Sigmoid colon (tissue), 7 donors: ENCODE measurements at regions of chr12 and their contacts with region 1.

Region 1: GRCh38 chr12:14769969-14770495 is 33.2 kb downstream of the WBP11 start:
- DNase-seq: peak; percentile 91
- H3K4me3 ChIP-seq: peak overlapping the region; percentile 63 to 85 (median 68)
- H3K27ac ChIP-seq: peak overlapping the region; percentile 88 to 96 (median 92)
- H3K4me1 ChIP-seq: peaks cover 0 to 34% (median 20%) of the 10 kb centered on the region in 4 donors
- H3K27me3 ChIP-seq: no peaks in the 10 kb centered on the region
- CTCF ChIP-seq: peak; percentile 92 to 97 (median 94)
- EP300 ChIP-seq: no peak
- POLR2A ChIP-seq: peak; percentile 34 to 39

Region 2: GRCh38 chr12:14257734-14258574 is 512.1 kb before region 1 on chr12:
- intact Hi-C with region 1: loop called (anchors 10 kb)
- DNase-seq: peak; percentile 95
- H3K4me3 ChIP-seq: peak overlapping the region in 1 of 4 donors; percentile 20
- H3K27ac ChIP-seq: peak overlapping the region; percentile 79 to 91 (median 83)
- H3K4me1 ChIP-seq: peaks cover 5 to 56% (median 48%) of the 10 kb centered on the region in 4 donors
- H3K27me3 ChIP-seq: no peaks in the 10 kb centered on the region
- CTCF ChIP-seq: no peak
- EP300 ChIP-seq: peak in 3 of 4 donors; percentile 30 to 63 (median 54)
- POLR2A ChIP-seq: no peak

Region 3: DNA sequence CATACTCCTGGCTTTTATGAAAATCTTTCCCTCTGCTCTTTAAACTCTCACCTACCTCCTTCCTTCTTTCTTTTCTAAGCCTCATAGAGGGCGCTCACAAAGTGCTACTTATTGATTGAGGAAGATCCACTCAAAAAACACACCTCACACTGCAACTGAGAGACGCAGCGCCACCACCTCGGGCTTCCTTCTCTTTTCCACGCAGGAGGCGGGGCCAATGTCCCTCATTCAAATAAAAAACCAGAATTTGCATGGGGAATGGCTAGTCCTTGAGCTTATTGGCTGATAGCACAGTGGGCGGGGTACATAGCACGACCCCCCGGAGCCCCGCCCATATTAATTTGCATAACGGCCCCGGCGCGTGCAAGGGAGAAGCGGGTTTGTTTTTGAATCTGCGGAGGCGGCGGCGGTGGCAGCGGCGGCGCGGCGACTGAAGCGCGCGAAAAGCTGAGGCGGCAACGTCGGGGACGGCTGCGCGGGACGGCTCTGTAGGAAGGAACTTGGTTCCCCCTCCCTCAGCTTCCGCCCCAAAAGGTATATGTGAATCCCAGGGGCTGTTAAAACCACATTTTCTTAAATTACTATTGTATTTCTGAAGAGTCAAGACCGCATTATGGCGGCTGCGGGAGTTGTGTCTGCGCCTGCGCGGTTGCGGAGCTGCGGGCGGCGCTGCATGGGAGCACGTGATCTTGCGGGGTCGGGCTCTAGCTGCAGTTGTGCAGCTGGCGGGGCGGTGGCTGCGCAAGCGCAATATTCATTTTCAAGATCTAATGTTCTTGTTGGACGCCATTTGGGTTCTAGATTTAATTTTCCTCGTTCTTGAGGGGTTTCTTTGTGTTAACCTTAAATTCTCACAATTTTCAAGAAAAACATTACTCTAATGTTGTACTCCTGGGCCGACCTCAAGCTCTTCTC is 404.5 kb before region 1 on chr12 and contains the start of gene ATF7IP:
- intact Hi-C with region 1: loop called (anchors 5 kb)
- DNase-seq: peak; percentile 98
- H3K4me3 ChIP-seq: peak within 1 kb of the TSS; percentile 61 to 69 (median 64)
- H3K27ac ChIP-seq: peak within 1 kb of the TSS; percentile 90 to 98 (median 93)
- H3K4me1 ChIP-seq: peaks cover 0 to 23% (median 8%) of the 10 kb centered on the region in 4 donors
- H3K27me3 ChIP-seq: no peaks in the 10 kb centered on the region
- CTCF ChIP-seq: peak in 2 of 4 experiments; percentile 6 to 16
- EP300 ChIP-seq: peak in 1 of 4 donors; percentile 7
- POLR2A ChIP-seq: peak; percentile 33 to 66
- total RNA-seq, gene ATF7IP: 27.7 to 58.4 (median 44.6) TPM

Region 4: GRCh38 chr12:14710632-14711320 is 59.3 kb before region 1 on chr12:
- intact Hi-C with region 1: no loop called
- DNase-seq: no peak
- H3K4me3 ChIP-seq: no peak overlapping the region
- H3K27ac ChIP-seq: peak overlapping the region in 3 of 4 donors; percentile 48 to 51 (median 48)
- H3K4me1 ChIP-seq: peaks cover 0 to 28% (median 16%) of the 10 kb centered on the region in 4 donors
- H3K27me3 ChIP-seq: no peaks in the 10 kb centered on the region
- CTCF ChIP-seq: no peak
- EP300 ChIP-seq: no peak
- POLR2A ChIP-seq: no peak

Region 5: GRCh38 chr12:14803011-14803829 is 33.2 kb after region 1 on chr12 and contains the starts of genes C12orf60 and WBP11:
- intact Hi-C with region 1: loop called (anchors 2 kb)
- DNase-seq: peak; percentile 99
- H3K4me3 ChIP-seq: peak within 1 kb of the TSS; percentile 63 to 84 (median 77)
- H3K27ac ChIP-seq: peak within 1 kb of the TSS; percentile 81 to 97 (median 92)
- H3K4me1 ChIP-seq: peaks cover 0 to 19% (median 16%) of the 10 kb centered on the region in 4 donors
- H3K27me3 ChIP-seq: no peaks in the 10 kb centered on the region
- CTCF ChIP-seq: no peak
- EP300 ChIP-seq: peak in 2 of 4 donors; percentile 15 to 46
- POLR2A ChIP-seq: peak; percentile 69 to 70
- total RNA-seq, gene C12orf60: 0.83 to 2.0 (median 1.1) TPM in 3 of 4 donors, not detected in the other
- total RNA-seq, gene WBP11: 14.3 to 20.7 (median 16.7) TPM

Region 6: GRCh38 chr12:14828896-14829295 is 58.9 kb after region 1 on chr12:
- intact Hi-C with region 1: no loop called
- DNase-seq: no peak
- H3K4me3 ChIP-seq: no peak overlapping the region
- H3K27ac ChIP-seq: no peak overlapping the region
- H3K4me1 ChIP-seq: no peaks in the 10 kb centered on the region
- H3K27me3 ChIP-seq: no peaks in the 10 kb centered on the region
- CTCF ChIP-seq: no peak
- EP300 ChIP-seq: no peak
- POLR2A ChIP-seq: no peak

Region 7: GRCh38 chr12:15882118-15882971 is 1112.3 kb after region 1 on chr12 and contains the start of gene STRAP:
- intact Hi-C with region 1: loop called (anchors 5 kb)
- DNase-seq: peak; percentile 99
- H3K4me3 ChIP-seq: peak within 1 kb of the TSS; percentile 79 to 89 (median 84)
- H3K27ac ChIP-seq: peak within 1 kb of the TSS; percentile 93 to 99 (median 96)
- H3K4me1 ChIP-seq: peaks cover 0 to 41% (median 33%) of the 10 kb centered on the region in 4 donors
- H3K27me3 ChIP-seq: no peaks in the 10 kb centered on the region
- CTCF ChIP-seq: no peak
- EP300 ChIP-seq: peak in 2 of 4 donors; percentile 38 to 76
- POLR2A ChIP-seq: peak; percentile 99
- total RNA-seq, gene STRAP: 52.8 to 68.5 (median 63.0) TPM

Region 8: DNA sequence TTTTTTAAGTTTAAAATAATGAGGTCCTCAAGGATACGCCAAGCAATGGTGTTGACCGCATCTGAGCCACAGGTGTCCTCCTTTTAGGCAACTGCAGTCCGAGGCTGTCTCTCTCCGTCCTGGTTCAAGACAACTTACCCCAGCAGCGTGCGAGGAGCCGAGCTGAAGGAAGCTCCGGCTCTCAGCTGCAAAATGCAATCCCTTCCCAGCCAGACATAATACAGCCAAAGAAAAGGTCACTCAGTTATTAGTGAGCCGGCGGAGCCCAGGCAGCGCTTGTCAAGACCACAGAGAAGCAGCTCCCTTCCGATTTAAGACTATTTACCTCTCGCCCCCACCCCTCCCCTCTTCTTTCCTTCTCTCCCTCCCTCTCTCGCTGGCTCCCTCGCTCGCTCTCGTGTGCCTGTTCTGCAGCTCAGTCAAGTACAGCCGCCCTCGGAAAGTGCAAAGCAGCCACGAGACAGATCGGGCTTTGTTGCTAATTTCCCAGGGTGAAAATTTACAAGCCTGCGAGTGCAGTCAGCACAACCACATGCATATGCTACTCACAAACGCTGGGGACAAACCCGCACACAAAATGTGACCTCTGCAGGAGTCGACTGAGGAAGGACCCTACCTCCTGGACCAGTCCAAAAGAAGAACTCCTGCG is 1836.3 kb after region 1 on chr12:
- intact Hi-C with region 1: loop called (anchors 10 kb)
- DNase-seq: peak; percentile 84
- H3K4me3 ChIP-seq: peak overlapping the region; percentile 50 to 67 (median 56)
- H3K27ac ChIP-seq: peak overlapping the region; percentile 84 to 91 (median 84)
- H3K4me1 ChIP-seq: peaks cover 0 to 18% (median 5%) of the 10 kb centered on the region in 4 donors
- H3K27me3 ChIP-seq: no peaks in the 10 kb centered on the region
- CTCF ChIP-seq: no peak
- EP300 ChIP-seq: no peak
- POLR2A ChIP-seq: peak in 1 of 2 donors; percentile 45